ENCODE measurements at regions of chr16 and their contacts with region 1.

Region 1: DNA sequence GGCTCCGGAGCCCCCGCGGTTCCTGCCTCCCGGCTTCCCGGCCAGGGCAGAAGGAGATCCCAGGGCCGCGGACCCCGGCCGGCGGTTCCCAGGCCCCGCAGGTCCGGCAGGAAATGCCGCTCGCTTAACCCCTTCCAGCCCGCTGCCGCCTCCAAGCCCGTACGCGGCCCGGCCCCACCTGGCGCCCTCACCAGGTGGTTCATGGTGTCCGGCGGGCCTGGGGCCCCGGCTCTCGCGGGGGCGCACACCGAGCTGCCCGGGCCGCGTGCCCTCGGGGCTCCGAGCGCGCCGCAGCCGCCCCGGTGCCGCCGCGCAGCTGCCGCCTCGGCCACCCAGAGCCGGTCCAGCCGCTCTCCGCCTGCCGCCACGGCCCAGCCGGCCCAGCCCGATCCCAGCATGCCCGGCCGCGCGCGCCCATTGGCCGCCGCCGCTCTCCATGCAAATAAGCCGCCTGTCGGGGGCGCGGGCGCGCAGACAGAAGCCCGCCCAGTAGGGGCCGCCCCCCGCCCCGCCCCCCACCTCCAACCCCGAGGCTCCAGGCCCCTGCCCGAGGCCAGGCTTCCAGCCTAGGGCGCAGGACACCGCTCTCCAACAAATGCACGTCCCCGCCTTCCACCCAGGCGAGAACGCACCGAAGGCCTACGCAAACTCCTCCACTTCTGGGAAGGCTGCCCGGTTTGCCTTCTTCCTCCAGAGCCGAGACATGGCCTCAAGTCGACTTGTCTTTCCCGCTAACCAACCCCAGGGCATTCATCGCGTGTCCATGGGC is at the start of gene BCAR1:
- DNase-seq: peak; percentile 59 to 95
- H3K4me3 ChIP-seq: peak within 1 kb of the TSS; percentile 69 to 85
- H3K27ac ChIP-seq: peak within 1 kb of the TSS; percentile 94 to 100
- H3K4me1 ChIP-seq: peaks cover 60 to 81% of the 10 kb centered on the region in 2 donors
- H3K27me3 ChIP-seq: no peaks in the 10 kb centered on the region
- CTCF ChIP-seq: peak in 2 of 3 experiments; percentile 15 to 18
- total RNA-seq, gene BCAR1: 243 TPM

Region 2: DNA sequence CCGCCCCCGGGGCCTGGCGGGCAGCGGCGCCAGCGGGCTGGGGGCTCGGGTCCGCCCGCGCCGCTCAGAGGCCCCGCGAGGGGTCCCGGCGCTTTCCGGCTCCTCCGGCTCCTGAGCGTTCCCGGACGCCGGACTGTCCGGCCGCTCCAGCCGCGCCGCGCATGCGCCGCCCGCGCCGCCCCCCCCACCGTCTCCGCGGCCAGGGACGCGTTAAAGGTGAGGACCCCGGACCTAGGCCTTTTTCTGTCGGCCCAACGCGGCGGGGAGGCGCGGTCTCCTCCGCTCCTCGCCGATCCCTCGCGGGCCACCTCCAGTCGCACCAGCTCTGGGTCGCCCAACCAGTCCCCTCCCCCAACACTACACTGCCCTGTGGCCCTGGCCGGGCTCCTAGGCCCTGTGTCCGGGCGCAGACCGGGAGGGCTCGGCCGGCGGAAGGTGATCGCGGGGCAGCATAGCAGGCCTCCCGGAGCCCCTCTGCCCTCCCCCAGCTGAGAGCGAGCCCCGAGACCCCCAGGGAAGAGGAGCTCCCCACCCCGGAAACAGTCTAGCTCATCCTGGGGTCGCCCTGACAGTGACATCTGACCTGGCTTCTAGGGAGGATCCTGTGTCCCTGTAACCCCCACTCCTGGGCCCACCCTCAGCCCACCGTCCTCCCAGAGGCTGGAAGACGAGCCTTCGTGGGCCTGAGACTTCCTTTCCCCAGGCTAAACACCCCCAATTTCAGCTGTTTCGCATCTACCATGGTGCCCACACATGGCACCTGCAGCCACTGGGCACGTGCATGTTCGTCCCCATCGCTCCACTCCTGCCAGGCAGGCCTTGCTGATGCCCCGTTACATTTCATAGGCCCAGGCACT is 14.6 kb after region 1 on chr16:
- intact Hi-C with region 1: loop called (anchors 2 kb)
- DNase-seq: peak in 1 of 2 donors; percentile 86
- H3K4me3 ChIP-seq: peak overlapping the region; percentile 76 to 86
- H3K27ac ChIP-seq: peak overlapping the region; percentile 90 to 95
- H3K4me1 ChIP-seq: peaks cover 34 to 38% of the 10 kb centered on the region in 2 donors
- H3K27me3 ChIP-seq: no peaks in the 10 kb centered on the region
- CTCF ChIP-seq: no peak

Region 3: GRCh38 chr16:75279305-75279704 is 27.8 kb after region 1 on chr16:
- intact Hi-C with region 1: no loop called
- DNase-seq: no peak
- H3K4me3 ChIP-seq: no peak overlapping the region
- H3K27ac ChIP-seq: no peak overlapping the region
- H3K4me1 ChIP-seq: peaks cover 0 to 5% of the 10 kb centered on the region in 2 donors
- H3K27me3 ChIP-seq: no peaks in the 10 kb centered on the region
- CTCF ChIP-seq: no peak

Region 4: DNA sequence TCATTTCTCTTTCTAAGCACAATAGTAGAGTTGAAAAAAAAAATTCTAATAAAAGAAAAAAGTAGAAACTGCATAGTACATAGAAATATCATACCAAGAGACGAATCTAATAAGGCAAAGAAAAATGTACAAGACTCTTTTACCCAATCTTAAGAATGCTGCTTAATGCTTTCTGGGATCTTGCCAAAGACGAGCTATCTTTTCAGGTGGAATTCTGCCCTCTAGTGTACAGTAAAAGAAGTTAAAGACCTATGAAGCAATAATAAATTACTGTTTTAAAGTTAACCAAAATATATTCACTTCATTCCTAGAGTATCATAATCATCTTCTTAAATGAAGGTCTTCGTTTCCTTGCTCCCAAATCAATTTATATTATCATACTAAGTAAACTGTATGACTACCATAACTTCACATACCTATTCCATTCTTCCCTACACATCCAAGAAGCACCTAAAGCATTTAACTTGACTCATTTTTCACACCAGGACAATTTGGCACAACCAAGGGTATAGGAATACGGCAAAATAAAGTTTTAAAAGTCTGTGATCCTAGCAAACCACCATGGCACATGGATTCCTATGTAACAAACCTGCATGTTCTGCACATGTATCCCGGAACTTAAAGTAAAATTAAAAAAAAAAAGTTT is 134.2 kb after region 1 on chr16:
- intact Hi-C with region 1: loop called (anchors 5 kb)
- DNase-seq: no peak
- H3K4me3 ChIP-seq: no peak overlapping the region
- H3K27ac ChIP-seq: peak overlapping the region; percentile 19 to 32
- H3K4me1 ChIP-seq: peaks cover 5 to 32% of the 10 kb centered on the region in 2 donors
- H3K27me3 ChIP-seq: no peaks in the 10 kb centered on the region
- CTCF ChIP-seq: peak; percentile 58 to 72 (median 68)

Measured in ascending aorta (tissue), 2 donors.